ENCODE measurements at regions of chr22 and their contacts with region 1.

Region 1: GRCh38 chr22:31561238-31561887 is 65.0 kb downstream of the SFI1 start:
- DNase-seq: peak; percentile 81
- ATAC-seq: peak; percentile 100
- H3K4me3 ChIP-seq: no peak overlapping the region
- H3K27ac ChIP-seq: no peak overlapping the region
- H3K4me1 ChIP-seq: peaks cover 12% of the 10 kb centered on the region
- H3K27me3 ChIP-seq: no peaks in the 10 kb centered on the region
- CTCF ChIP-seq: peak; percentile 98
- EP300 ChIP-seq: no peak
- POLR2A ChIP-seq: no peak
- RAD21 ChIP-seq: peak; percentile 95

Region 2: GRCh38 chr22:31602259-31602952 is 41.0 kb after region 1 on chr22:
- CTCF ChIA-PET with region 1: no interaction called
- POLR2A ChIA-PET with region 1: interaction called, 3 read pairs
- in situ Hi-C with region 1: no loop called
- intact Hi-C with region 1: loop called (anchors 5 kb)
- DNase-seq: no peak
- ATAC-seq: no peak
- H3K4me3 ChIP-seq: no peak overlapping the region
- H3K27ac ChIP-seq: no peak overlapping the region
- H3K4me1 ChIP-seq: peaks cover 25% of the 10 kb centered on the region
- H3K27me3 ChIP-seq: no peaks in the 10 kb centered on the region
- CTCF ChIP-seq: no peak
- EP300 ChIP-seq: no peak
- POLR2A ChIP-seq: no peak
- RAD21 ChIP-seq: no peak

Region 3: DNA sequence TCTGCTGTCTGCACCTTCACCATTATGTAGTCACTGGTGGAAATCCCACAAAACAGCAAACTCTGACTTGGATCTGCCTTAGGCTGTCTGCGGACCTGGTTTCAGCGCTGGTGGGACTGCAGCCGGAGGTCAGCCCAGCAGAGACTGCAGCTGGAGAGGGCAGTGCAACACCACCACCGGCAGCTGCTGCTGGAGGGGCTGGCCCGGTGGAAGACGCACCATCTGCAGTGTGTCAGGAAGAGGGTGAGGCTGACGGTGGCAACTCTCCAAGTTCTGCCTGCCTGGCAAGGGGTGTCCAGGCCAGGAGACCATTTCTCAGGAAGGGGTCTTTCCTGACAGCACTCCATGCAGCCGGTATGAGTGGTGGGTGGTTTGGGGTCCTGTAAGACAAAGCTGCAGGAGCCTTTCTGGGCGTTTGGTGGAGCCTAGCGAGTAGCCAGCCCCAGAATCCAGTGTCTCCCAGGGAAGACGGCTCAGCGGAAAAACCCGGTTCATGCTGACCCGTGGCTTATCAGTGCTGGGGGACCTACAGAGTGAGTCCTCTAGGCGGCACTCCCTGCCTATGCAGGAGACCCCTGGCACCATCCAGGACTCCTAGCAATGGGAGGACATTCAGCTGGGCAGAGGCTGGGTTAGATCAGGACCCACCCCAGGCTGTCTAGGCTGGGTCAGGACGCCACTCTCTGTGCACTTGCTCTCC is 49.8 kb after region 1 on chr22:
- CTCF ChIA-PET with region 1: no interaction called
- POLR2A ChIA-PET with region 1: interaction called, 3 read pairs
- in situ Hi-C with region 1: loop called (anchors 5 kb)
- intact Hi-C with region 1: loop called (anchors 2 kb)
- DNase-seq: no peak
- ATAC-seq: no peak
- H3K4me3 ChIP-seq: no peak overlapping the region
- H3K27ac ChIP-seq: no peak overlapping the region
- H3K4me1 ChIP-seq: peaks cover 26% of the 10 kb centered on the region
- H3K27me3 ChIP-seq: no peaks in the 10 kb centered on the region
- CTCF ChIP-seq: no peak
- EP300 ChIP-seq: no peak
- POLR2A ChIP-seq: no peak
- RAD21 ChIP-seq: no peak

Region 4: GRCh38 chr22:31616315-31617001 is 55.1 kb after region 1 on chr22:
- CTCF ChIA-PET with region 1: no interaction called
- POLR2A ChIA-PET with region 1: interaction called, 3 read pairs
- in situ Hi-C with region 1: loop called (anchors 5 kb)
- intact Hi-C with region 1: loop called (anchors 2 kb)
- DNase-seq: peak; percentile 31
- ATAC-seq: peak; percentile 56
- H3K4me3 ChIP-seq: no peak overlapping the region
- H3K27ac ChIP-seq: peak overlapping the region; percentile 33
- H3K4me1 ChIP-seq: peaks cover 40% of the 10 kb centered on the region
- H3K27me3 ChIP-seq: no peaks in the 10 kb centered on the region
- CTCF ChIP-seq: no peak
- EP300 ChIP-seq: no peak
- POLR2A ChIP-seq: peak in 1 of 2 experiments; percentile 55; a peak in 1 of 4 replicates
- RAD21 ChIP-seq: 0 out of 2 replicates have a peak, but pooled peaks have one; percentile 22

Region 5: DNA sequence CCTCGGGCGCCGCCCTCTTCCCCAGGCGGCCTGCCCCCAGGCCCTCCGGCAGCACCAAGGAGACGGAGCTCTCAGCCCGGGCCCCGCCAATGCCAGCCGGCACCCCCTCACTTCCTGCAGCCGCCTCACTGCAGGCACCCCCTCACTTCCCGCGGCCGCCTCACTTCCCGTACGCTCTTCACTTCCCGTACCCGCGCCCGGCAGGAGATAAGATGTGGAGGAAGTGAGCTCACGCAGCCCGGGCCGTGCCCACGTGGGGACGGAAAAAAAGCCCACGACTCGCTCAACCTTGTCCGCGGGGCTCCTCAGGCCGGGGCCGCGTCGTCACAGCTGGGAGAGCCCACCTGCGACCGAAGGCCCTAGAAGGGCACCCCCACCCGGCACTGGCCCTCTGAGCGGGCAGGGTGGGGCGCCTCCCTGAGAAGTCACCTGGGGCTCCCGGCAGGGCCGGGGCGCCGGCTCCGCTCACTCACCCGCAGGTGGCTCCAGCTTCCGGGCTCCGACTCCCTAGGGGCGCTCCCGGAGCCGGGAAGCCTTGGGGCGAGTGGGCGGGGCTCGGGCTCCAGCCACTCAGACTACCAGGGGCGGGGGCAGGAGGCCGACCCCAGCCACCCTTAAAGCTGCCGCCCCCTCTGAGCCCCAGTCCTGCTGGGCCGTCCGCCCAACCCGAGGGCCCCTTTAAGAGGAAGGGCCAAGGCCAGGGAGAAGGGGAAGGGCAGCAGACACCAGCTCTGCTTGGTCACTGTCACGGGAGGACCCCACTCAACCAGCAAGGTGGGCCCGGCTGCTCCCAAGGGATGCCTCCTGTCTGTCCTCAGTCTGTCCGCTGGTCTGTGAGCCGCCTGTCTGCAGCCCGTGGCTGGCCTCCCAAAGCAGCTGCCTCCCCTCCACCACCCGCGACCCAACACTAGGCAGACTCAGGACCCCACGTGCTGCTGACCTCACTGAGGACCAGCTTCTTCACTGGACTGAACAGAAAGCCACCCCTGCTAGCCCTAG is 69.3 kb after region 1 on chr22:
- CTCF ChIA-PET with region 1: interaction called, 30 read pairs
- POLR2A ChIA-PET with region 1: interaction called, 11 read pairs
- in situ Hi-C with region 1: no loop called
- intact Hi-C with region 1: loop called (anchors 1 kb)
- DNase-seq: peak; percentile 75
- ATAC-seq: peak; percentile 80
- H3K4me3 ChIP-seq: peak overlapping the region; percentile 66 to 86 (median 77)
- H3K27ac ChIP-seq: peak overlapping the region; percentile 72
- H3K4me1 ChIP-seq: peaks cover 72% of the 10 kb centered on the region
- H3K27me3 ChIP-seq: no peaks in the 10 kb centered on the region
- CTCF ChIP-seq: peak; percentile 24; the same call in 1 of the 2 replicates
- EP300 ChIP-seq: no peak
- POLR2A ChIP-seq: peak; percentile 55 to 56; a peak in 3 of 4 replicates
- RAD21 ChIP-seq: no peak

Region 6: GRCh38 chr22:31635638-31636306 is 74.4 kb after region 1 on chr22:
- CTCF ChIA-PET with region 1: interaction called, 30 read pairs
- POLR2A ChIA-PET with region 1: interaction called, 11 read pairs
- in situ Hi-C with region 1: no loop called
- intact Hi-C with region 1: loop called (anchors 1 kb)
- DNase-seq: no peak
- ATAC-seq: no peak
- H3K4me3 ChIP-seq: no peak overlapping the region
- H3K27ac ChIP-seq: no peak overlapping the region
- H3K4me1 ChIP-seq: peaks cover 30% of the 10 kb centered on the region
- H3K27me3 ChIP-seq: no peaks in the 10 kb centered on the region
- CTCF ChIP-seq: no peak
- EP300 ChIP-seq: no peak
- POLR2A ChIP-seq: no peak
- RAD21 ChIP-seq: no peak

Region 7: GRCh38 chr22:31970490-31971444 is 409.4 kb after region 1 on chr22:
- CTCF ChIA-PET with region 1: no interaction called
- POLR2A ChIA-PET with region 1: no interaction called
- in situ Hi-C with region 1: loop called (anchors 25 kb)
- intact Hi-C with region 1: no loop called
- DNase-seq: peak; percentile 31
- ATAC-seq: peak; percentile 83
- H3K4me3 ChIP-seq: peak overlapping the region; percentile 42 to 74 (median 46)
- H3K27ac ChIP-seq: no peak overlapping the region
- H3K4me1 ChIP-seq: peaks cover 27% of the 10 kb centered on the region
- H3K27me3 ChIP-seq: peaks cover 0 to 9% of the 10 kb centered on the region in 2 experiments; a peak in 3 of 5 replicates
- CTCF ChIP-seq: peak; percentile 94
- EP300 ChIP-seq: no peak
- POLR2A ChIP-seq: no peak
- RAD21 ChIP-seq: peak; percentile 51; the same call in 1 of the 2 replicates

Measured in HepG2 (cell line).